ENCODE measurements at regions of chr4 and their contacts with region 1.

Region 1: GRCh38 chr4:36285784-36286480 is 4.5 kb downstream of the DTHD1 start:
- DNase-seq: peak; percentile 79
- H3K4me3 Mint-ChIP-seq: peak overlapping the region; percentile 22
- H3K27ac Mint-ChIP-seq: peak overlapping the region; percentile 85
- H3K4me1 Mint-ChIP-seq: peaks cover 32% of the 10 kb centered on the region
- H3K27me3 Mint-ChIP-seq: no peaks in the 10 kb centered on the region

Region 2: DNA sequence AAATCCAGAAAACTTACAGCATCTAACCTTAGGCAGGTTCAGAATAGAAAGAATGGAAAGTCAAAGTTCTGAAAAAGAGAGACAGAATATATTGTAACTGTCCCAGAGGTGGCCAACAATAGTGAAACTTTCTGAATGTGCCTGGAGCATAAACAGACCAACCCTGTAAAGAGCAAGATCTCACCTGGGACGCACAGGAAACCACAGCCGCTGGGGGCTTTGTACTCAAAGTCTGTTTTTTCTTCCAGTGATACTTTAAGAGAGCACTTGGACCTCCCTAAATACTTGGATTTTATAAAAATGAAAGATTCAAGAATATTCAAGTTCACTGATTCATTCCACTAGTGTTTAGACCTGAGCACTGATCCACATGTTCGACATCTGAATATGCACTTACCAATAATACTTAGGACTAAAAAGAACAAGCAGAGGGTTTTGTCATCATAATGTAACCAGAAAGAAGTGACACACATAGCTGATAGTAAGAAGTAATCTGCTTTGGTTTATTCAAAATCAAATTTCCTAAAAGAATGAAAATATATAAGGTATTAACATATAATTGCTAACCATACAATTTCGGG is 76.9 kb before region 1 on chr4:
- CTCF ChIA-PET with region 1: no interaction called
- intact Hi-C with region 1: loop called (anchors 1 kb)
- DNase-seq: peak; percentile 31
- H3K4me3 Mint-ChIP-seq: no peak overlapping the region
- H3K27ac Mint-ChIP-seq: peak overlapping the region; percentile 44
- H3K4me1 Mint-ChIP-seq: peaks cover 29% of the 10 kb centered on the region
- H3K27me3 Mint-ChIP-seq: no peaks in the 10 kb centered on the region

Region 3: GRCh38 chr4:36269101-36269500 is 16.8 kb before region 1 on chr4:
- CTCF ChIA-PET with region 1: interaction called, 5 read pairs
- intact Hi-C with region 1: loop called (anchors 1 kb)
- DNase-seq: peak; percentile 53
- H3K4me3 Mint-ChIP-seq: no peak overlapping the region
- H3K27ac Mint-ChIP-seq: no peak overlapping the region
- H3K4me1 Mint-ChIP-seq: peaks cover 34% of the 10 kb centered on the region
- H3K27me3 Mint-ChIP-seq: no peaks in the 10 kb centered on the region

Region 4: GRCh38 chr4:36325499-36325898 is 39.6 kb after region 1 on chr4:
- CTCF ChIA-PET with region 1: interaction called, 4 read pairs
- intact Hi-C with region 1: loop called (anchors 1 kb)
- DNase-seq: peak; percentile 25
- H3K4me3 Mint-ChIP-seq: no peak overlapping the region
- H3K27ac Mint-ChIP-seq: peak overlapping the region; percentile 52
- H3K4me1 Mint-ChIP-seq: peaks cover 62% of the 10 kb centered on the region
- H3K27me3 Mint-ChIP-seq: no peaks in the 10 kb centered on the region

Region 5: GRCh38 chr4:36394352-36394903 is 108.5 kb after region 1 on chr4:
- CTCF ChIA-PET with region 1: interaction called, 4 read pairs
- intact Hi-C with region 1: loop called (anchors 1 kb)
- DNase-seq: peak; percentile 63
- H3K4me3 Mint-ChIP-seq: peak overlapping the region; percentile 55
- H3K27ac Mint-ChIP-seq: peak overlapping the region; percentile 97
- H3K4me1 Mint-ChIP-seq: peaks cover 21% of the 10 kb centered on the region
- H3K27me3 Mint-ChIP-seq: no peaks in the 10 kb centered on the region